Activated naive CD4-positive, alpha-beta T cell treated with anti-CD3 and anti-CD28 coated beads for 36 hours (primary cell): ENCODE measurements at regions of chr12 and their contacts with region 1.

Region 1: GRCh38 chr12:24838531-24838950 is 110.4 kb downstream of the BCAT1 start:
- DNase-seq: peak; percentile 45
- H3K4me3 Mint-ChIP-seq: no peak overlapping the region
- H3K27ac Mint-ChIP-seq: peak overlapping the region; percentile 83
- H3K4me1 Mint-ChIP-seq: peaks cover 32% of the 10 kb centered on the region
- H3K27me3 Mint-ChIP-seq: peaks cover 11% of the 10 kb centered on the region

Region 2: DNA sequence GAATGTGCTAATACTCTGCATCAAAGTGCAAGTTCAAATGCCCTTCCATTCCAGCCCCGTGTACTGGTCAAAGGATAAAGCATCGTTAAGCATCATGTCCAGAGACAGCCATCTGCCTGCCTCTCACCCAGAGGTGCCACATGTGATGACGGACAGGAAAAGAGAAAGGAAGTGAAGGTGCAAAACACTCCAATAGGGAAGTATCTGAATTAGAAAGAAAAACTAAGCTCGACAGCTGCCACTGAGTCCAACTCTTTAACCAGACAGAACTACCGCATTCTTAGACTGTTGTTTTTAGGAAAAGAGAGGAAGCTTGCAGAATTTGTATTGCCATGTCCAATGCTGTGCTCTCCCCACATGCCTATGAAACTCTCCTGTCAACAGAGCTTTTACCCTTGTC is 424.1 kb before region 1 on chr12:
- CTCF ChIA-PET with region 1: no interaction called
- intact Hi-C with region 1: loop called (anchors 10 kb)
- DNase-seq: no peak
- H3K4me3 Mint-ChIP-seq: no peak overlapping the region
- H3K27ac Mint-ChIP-seq: no peak overlapping the region
- H3K4me1 Mint-ChIP-seq: no peaks in the 10 kb centered on the region
- H3K27me3 Mint-ChIP-seq: no peaks in the 10 kb centered on the region

Region 3: DNA sequence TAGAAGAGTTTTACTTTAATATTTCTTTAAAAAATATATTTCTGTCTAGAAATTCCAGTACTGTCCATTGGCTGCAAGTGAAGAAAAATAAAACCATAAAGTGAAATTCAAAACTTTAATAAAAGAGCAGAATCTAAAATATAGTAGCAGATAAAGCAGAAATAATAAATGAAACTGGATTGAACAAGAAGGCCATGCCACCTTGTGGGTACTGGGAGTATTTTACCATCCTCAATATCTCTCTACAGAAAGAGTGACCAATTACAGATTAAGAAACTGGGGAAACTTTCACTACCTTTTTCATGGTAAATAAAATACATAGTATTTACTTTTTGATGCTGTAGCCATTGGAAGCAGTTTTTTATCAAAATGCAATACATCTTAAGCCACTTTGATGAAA is 110.2 kb before region 1 on chr12:
- CTCF ChIA-PET with region 1: interaction called, 5 read pairs
- intact Hi-C with region 1: loop called (anchors 1 kb)
- DNase-seq: no peak
- H3K4me3 Mint-ChIP-seq: no peak overlapping the region
- H3K27ac Mint-ChIP-seq: no peak overlapping the region
- H3K4me1 Mint-ChIP-seq: peaks cover 31% of the 10 kb centered on the region
- H3K27me3 Mint-ChIP-seq: peaks cover 4% of the 10 kb centered on the region

Region 4: DNA sequence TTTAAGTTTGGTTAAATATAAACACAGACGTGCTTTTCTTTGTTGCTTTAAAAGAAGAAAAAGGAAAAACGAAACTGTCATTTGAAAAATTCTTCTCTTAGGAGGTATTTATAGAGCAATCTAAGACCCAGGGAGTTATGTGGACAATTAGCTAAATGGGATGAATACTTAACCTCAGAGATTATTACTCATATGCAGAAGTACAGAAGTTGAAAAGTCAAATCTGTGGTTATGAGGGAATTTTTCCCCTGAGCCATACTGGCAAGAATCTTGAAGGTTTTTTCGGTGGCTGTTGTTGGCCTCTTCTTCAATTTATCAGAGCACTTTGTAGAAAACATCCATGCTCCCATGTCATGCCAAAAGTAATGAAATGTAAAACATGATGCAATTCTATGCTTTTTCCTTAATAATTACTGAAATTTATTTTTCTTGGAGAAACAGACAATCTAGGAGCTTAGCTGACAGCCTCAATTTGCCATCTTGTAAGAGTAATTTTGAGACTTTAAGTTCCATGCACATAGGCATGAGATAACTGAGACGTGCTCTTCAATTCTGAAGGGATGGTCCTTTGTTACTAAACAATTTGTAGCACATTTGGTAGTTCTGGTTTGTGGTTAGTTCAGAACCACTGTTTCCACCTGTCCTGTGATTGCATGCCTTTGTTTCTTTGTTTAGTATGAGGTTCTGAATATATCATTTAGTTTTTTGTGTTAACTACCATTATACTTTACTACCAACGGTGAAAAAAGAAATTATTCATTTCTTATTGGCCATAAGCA is 16.2 kb before region 1 on chr12:
- CTCF ChIA-PET with region 1: no interaction called
- intact Hi-C with region 1: loop called (anchors 1 kb)
- DNase-seq: no peak
- H3K4me3 Mint-ChIP-seq: no peak overlapping the region
- H3K27ac Mint-ChIP-seq: no peak overlapping the region
- H3K4me1 Mint-ChIP-seq: peaks cover 24% of the 10 kb centered on the region
- H3K27me3 Mint-ChIP-seq: peaks cover 2% of the 10 kb centered on the region

Region 5: DNA sequence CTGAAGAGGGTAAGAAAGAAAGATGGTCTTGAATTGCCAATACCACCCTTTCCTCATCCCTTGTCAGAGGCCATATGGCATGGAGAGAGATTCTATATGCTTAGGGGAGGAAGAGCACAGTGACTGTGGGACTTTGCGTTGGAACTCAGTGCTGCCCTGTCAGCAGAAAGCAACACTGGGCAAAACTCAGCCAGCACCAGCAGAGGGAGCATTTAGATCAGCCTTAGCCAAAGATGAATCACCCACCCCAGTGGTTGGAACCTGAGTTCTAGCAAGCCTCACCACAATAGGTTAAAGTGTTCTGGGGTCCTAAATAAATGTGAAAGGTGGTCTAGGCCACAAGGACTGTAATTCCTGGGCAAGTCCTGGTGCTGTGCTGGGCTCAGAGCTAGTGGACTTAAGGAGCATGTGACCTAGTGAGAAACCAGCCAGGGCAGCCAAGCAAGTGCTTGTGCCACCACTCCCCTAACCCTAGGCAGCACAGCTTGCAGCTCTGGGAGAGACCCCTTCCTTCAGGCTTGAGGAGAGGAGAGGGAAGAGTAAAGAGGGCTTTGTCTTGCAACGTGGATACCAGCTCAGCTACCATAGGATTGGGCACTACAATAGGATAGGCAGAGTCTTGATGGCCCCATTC is 121.8 kb after region 1 on chr12:
- CTCF ChIA-PET with region 1: interaction called, 8 read pairs
- intact Hi-C with region 1: loop called (anchors 1 kb)
- DNase-seq: peak; percentile 76
- H3K4me3 Mint-ChIP-seq: no peak overlapping the region
- H3K27ac Mint-ChIP-seq: no peak overlapping the region
- H3K4me1 Mint-ChIP-seq: peaks cover 23% of the 10 kb centered on the region
- H3K27me3 Mint-ChIP-seq: peaks cover 17% of the 10 kb centered on the region

Region 6: DNA sequence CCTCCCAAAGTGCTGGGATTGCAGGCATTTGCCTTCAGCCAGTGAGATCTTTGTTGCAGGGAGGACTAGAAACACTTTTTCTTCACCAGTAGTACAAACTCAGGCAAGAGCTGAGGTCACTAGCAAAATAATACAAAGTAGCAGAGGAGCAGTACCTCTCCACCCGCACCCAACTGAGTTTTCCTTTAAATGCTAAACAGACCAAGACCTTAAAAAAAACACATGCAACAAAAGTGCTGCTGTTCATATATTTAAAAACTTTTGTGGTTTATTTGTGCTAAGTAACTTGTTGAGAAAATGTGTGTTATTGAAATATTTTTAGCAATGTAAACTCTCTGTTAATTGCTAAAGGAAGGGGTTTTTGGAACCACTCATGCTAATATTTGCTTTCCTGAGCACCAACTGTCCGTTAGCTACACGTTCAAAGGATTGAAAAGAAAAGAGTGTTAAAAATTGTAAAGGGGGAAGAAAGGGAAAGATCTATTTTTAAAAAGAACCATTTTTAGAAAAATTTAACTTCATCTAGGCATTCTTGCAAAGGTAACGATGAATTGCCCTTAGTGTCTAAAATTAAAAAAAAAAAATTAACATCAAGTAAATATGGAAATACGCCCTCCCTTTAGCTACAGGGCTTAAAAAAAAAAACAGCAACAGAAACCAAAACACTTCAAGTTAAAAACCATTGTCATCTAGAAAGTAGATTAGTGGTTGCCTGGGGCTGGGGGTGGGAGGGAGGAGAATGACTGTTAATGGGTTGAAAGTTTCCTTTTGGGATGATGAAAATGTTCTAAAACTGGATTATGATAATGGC is 526.2 kb after region 1 on chr12:
- CTCF ChIA-PET with region 1: no interaction called
- intact Hi-C with region 1: loop called (anchors 1 kb)
- DNase-seq: peak; percentile 82
- H3K4me3 Mint-ChIP-seq: peak overlapping the region; percentile 39
- H3K27ac Mint-ChIP-seq: peak overlapping the region; percentile 56
- H3K4me1 Mint-ChIP-seq: peaks cover 15% of the 10 kb centered on the region
- H3K27me3 Mint-ChIP-seq: peaks cover 5% of the 10 kb centered on the region